Endothelial cell of umbilical vein (primary cell): ENCODE measurements at regions of chr1 and their contacts with region 1.

Region 1: GRCh38 chr1:229258031-229258756 is 12.7 kb upstream of the RAB4A start:
- DNase-seq: peak; percentile 71
- H3K4me3 ChIP-seq: no peak overlapping the region
- H3K27ac ChIP-seq: no peak overlapping the region
- H3K4me1 ChIP-seq: peaks cover 5% of the 10 kb centered on the region
- H3K27me3 ChIP-seq: no peaks in the 10 kb centered on the region
- CTCF ChIP-seq: peak; percentile 68 to 80
- POLR2A ChIP-seq: no peak

Region 2: GRCh38 chr1:228664399-228664914 is 593.7 kb before region 1 on chr1:
- CTCF ChIA-PET with region 1: interaction called, 38 read pairs
- POLR2A ChIA-PET with region 1: no interaction called
- dilution Hi-C with region 1: no loop called
- intact Hi-C with region 1: no loop called
- DNase-seq: peak; percentile 61
- H3K4me3 ChIP-seq: no peak overlapping the region
- H3K27ac ChIP-seq: no peak overlapping the region
- H3K4me1 ChIP-seq: no peaks in the 10 kb centered on the region
- H3K27me3 ChIP-seq: no peaks in the 10 kb centered on the region
- CTCF ChIP-seq: peak; percentile 60 to 66
- POLR2A ChIP-seq: no peak

Region 3: DNA sequence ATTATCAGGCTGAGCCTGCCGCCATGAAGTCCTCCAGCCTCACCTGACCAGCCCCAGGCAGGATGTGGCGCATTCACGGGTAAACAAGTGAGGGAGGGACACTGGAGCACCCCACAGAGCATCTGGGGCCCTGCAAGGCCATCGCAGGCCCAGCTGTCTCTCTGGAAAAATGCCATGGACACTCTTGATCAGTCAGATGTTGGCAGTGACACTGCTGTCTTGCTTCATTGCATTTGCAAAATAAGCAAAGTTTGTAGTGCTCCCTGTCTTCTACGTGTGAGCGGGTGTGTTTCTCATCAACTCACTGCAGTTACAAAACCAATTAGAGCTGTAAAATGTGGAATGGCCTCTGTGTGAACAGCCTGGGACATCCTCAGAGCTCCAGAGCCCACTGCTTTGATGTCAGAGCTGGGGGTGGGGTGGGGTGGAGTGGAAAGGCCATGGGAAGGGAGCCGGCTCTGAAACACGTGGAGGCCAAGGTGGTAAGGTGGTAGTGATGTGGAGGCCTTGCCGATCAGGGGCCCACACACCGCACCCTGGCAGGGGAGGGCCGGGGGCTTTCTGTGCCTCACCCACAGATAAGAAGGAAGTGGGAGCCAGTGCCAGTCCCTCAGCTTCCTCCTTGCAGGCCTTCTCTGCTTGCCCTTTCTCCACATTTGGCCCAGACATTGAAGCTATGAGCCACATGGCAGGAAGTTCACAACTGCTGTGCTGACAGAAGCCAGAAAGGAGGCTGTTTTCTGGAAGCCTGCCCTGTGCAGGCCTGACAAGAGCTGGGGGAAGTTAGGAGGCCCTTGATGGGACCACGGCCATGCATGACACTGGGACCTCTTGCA is 268.0 kb before region 1 on chr1:
- CTCF ChIA-PET with region 1: no interaction called
- POLR2A ChIA-PET with region 1: no interaction called
- dilution Hi-C with region 1: no loop called
- intact Hi-C with region 1: no loop called
- DNase-seq: peak; percentile 16
- H3K4me3 ChIP-seq: no peak overlapping the region
- H3K27ac ChIP-seq: no peak overlapping the region
- H3K4me1 ChIP-seq: no peaks in the 10 kb centered on the region
- H3K27me3 ChIP-seq: peaks cover 0 to 3% of the 10 kb centered on the region in 2 experiments
- CTCF ChIP-seq: no peak
- POLR2A ChIP-seq: no peak

Region 4: GRCh38 chr1:229227298-229227919 is 30.8 kb before region 1 on chr1:
- CTCF ChIA-PET with region 1: interaction called, 11 read pairs
- POLR2A ChIA-PET with region 1: no interaction called
- dilution Hi-C with region 1: no loop called
- intact Hi-C with region 1: no loop called
- DNase-seq: peak; percentile 66
- H3K4me3 ChIP-seq: no peak overlapping the region
- H3K27ac ChIP-seq: no peak overlapping the region
- H3K4me1 ChIP-seq: peaks cover 3% of the 10 kb centered on the region
- H3K27me3 ChIP-seq: peaks cover 4 to 14% of the 10 kb centered on the region in 2 experiments
- CTCF ChIP-seq: peak; percentile 78 to 84
- POLR2A ChIP-seq: no peak

Region 5: DNA sequence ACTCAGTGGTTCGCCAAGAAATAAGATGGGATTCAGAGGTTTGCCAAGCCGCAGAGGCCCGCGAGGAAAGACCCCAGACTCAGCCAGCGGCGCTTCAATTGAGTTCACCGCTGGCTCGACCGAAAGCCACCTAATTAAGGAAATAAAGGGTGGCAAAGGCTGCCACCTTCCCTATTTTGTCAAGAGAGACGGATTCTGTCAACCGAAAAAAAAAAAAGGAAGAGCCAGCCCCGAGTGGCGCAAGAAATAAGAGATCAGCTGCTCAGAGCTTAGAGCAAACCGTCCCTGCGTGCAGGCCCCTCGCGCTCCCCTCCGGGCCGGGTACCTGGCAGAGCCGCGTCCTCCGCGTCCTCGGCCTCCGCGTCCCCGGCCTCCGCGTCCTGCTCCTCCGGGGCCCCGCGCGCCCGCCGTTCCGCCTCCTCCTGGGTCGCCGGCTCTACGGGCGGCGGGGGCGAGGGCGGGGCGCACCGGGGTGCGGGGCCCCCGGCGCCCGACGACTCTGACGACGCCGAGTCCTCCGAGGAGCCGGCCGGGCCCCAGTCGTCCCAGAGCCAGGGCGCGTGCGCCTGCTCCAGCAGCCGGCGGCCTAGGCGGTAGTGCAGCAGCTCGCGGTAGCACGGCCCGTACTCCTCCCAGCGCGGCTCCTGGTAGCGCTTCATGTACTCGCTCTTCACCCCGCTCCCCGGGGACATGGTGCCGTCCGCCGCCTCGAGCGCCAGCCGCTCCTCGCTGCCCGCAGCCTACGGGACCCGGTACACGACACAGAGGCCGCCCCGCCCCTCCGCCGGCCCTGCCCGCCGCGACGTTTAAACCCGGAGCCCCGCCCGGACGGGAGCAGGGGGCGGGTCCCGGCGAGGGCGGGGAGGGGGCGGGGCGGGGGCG is 83.8 kb after region 1 on chr1:
- CTCF ChIA-PET with region 1: no interaction called
- POLR2A ChIA-PET with region 1: no interaction called
- dilution Hi-C with region 1: no loop called
- intact Hi-C with region 1: loop called (anchors 2 kb)
- DNase-seq: peak; percentile 75
- H3K4me3 ChIP-seq: peak overlapping the region; percentile 53 to 89 (median 80)
- H3K27ac ChIP-seq: no peak overlapping the region
- H3K4me1 ChIP-seq: peaks cover 11% of the 10 kb centered on the region
- H3K27me3 ChIP-seq: no peaks in the 10 kb centered on the region
- CTCF ChIP-seq: no peak
- POLR2A ChIP-seq: peak; percentile 18

Region 6: DNA sequence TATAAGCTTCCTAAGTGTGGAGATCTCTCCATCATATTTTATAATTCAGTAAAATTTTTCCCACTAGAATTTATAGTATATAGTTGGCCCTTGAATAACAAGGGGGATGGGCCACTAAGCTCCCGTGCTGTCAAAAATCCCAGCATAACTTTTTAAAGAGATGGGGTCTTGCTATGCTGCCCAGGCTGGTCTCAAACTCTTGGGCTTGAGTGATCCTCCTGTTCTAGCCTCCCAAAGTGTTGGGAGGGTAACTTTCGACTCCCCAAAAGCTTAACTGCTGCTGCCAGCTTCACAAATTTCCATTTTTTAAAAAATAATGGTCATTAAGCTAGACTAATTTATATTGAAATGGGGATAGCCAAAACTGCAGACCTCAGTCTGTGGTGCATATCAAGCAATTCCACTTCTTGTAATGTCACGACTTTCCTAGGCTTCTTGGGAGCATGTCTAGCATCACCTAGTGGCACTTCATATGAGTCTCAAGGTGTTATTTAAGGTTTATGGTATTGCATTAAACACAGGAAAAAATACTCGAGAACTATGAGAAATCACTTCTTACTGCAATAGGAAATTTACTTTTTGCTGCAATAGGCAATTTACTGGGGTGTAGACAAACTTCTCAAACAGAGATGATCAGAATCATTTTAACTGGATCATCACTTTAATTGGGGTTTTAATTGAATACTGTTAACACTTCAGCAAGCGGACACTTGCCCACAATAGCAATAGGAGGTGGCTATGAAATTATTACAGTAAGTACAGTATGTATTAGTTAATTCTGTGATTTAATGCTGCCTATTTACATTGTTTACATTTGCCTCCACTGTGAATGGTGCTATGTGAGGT is 195.0 kb after region 1 on chr1:
- CTCF ChIA-PET with region 1: interaction called, 7 read pairs
- POLR2A ChIA-PET with region 1: no interaction called
- dilution Hi-C with region 1: no loop called
- intact Hi-C with region 1: loop called (anchors 1 kb)
- DNase-seq: no peak
- H3K4me3 ChIP-seq: no peak overlapping the region
- H3K27ac ChIP-seq: no peak overlapping the region
- H3K4me1 ChIP-seq: no peaks in the 10 kb centered on the region
- H3K27me3 ChIP-seq: no peaks in the 10 kb centered on the region
- CTCF ChIP-seq: peak in 1 of 2 donors; percentile 25
- POLR2A ChIP-seq: no peak

Region 7: DNA sequence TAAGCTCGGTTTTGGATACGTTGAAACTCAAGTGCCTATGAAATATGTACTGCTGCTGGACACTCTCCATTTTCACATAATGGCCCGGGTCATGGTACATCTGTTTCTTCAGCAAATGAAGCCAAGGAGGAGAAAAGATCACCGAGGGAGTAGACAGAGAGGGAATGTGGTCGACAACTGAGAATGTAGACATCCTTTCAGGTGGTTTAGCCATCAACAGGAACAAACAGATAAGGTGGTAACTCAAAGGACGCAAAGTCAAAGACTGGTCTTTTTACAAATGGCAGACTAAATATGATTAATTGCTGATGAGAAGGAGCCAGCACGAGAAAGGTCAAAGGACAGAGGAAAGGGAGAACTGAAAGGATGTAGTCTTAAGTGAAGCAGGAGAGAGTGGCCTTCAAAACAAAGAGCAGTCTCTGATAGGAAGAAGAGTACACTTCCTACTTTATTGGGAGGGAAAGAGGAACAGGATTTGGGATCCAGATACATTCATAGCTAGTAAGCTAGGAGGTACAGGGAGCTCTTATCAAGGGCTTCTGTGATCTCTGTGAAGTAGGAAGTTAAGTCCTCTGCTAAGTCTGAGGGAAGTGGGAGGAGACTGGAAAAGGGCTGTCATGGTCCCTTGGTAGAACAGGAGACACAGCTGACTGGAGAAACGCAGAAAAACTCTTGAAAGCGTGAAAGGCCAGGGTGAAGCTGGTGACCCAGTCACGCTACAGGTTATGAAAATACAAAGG is 221.6 kb after region 1 on chr1:
- CTCF ChIA-PET with region 1: interaction called, 295 read pairs
- POLR2A ChIA-PET with region 1: no interaction called
- dilution Hi-C with region 1: no loop called
- intact Hi-C with region 1: loop called (anchors 1 kb)
- DNase-seq: no peak
- H3K4me3 ChIP-seq: no peak overlapping the region
- H3K27ac ChIP-seq: no peak overlapping the region
- H3K4me1 ChIP-seq: no peaks in the 10 kb centered on the region
- H3K27me3 ChIP-seq: no peaks in the 10 kb centered on the region
- CTCF ChIP-seq: no peak
- POLR2A ChIP-seq: no peak

Region 8: DNA sequence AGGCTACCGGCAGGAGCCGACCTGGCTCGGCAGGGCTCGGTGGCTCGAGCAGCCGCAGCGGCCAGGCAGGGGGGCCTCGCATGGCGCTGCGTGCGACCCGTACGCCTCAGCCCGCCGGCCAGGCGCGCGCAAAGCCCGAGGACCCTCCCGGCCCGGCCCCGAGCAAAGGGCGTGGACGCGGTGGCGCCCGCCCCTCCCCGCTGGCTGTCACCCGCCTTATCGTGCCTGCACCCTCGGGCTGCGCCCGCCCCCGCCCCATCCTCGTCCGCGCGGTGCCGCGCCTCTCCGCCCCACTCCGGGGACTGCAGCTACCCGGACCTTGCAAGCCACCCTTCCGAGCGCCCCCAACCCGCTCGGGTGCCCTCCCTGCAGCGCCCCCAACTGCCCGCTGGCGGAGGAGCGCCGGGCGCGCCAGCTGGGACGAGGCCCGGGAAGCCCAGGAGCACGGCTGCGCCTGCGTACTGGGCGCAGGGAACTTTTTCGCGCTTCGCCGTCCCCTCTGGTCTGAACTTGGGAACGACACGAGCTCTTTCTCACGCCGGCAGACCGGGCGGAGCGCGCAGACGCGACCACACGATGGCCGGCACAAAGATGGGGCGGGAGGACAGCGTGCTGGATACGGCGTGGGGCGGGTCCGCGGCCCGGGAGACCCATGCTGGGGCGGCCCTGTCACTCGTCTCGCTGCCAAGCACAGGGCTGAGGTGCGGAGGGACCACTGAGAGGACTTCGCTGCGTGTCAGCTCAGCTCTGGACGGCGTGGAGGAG is 300.6 kb after region 1 on chr1 and contains the start of gene ABCB10:
- CTCF ChIA-PET with region 1: interaction called, 4 read pairs
- POLR2A ChIA-PET with region 1: no interaction called
- dilution Hi-C with region 1: no loop called
- intact Hi-C with region 1: loop called (anchors 5 kb)
- DNase-seq: peak; percentile 99
- H3K4me3 ChIP-seq: peak within 1 kb of the TSS; percentile 83 to 84 (median 84)
- H3K27ac ChIP-seq: peak within 1 kb of the TSS; percentile 6
- H3K4me1 ChIP-seq: peaks cover 15% of the 10 kb centered on the region
- H3K27me3 ChIP-seq: no peaks in the 10 kb centered on the region
- CTCF ChIP-seq: peak; percentile 86 to 97
- POLR2A ChIP-seq: no peak
- total RNA-seq, gene ABCB10: 19.4 and 19.8 TPM in 2 replicates

Region 9: GRCh38 chr1:229768217-229768616 is 510.0 kb after region 1 on chr1:
- CTCF ChIA-PET with region 1: no interaction called
- POLR2A ChIA-PET with region 1: no interaction called
- dilution Hi-C with region 1: no loop called
- intact Hi-C with region 1: no loop called
- DNase-seq: no peak
- H3K4me3 ChIP-seq: no peak overlapping the region
- H3K27ac ChIP-seq: no peak overlapping the region
- H3K4me1 ChIP-seq: no peaks in the 10 kb centered on the region
- H3K27me3 ChIP-seq: no peaks in the 10 kb centered on the region
- CTCF ChIP-seq: no peak
- POLR2A ChIP-seq: no peak